CD8-positive, alpha-beta T cell (primary cell): ENCODE measurements at regions of chr20 and their contacts with region 1.

Region 1: DNA sequence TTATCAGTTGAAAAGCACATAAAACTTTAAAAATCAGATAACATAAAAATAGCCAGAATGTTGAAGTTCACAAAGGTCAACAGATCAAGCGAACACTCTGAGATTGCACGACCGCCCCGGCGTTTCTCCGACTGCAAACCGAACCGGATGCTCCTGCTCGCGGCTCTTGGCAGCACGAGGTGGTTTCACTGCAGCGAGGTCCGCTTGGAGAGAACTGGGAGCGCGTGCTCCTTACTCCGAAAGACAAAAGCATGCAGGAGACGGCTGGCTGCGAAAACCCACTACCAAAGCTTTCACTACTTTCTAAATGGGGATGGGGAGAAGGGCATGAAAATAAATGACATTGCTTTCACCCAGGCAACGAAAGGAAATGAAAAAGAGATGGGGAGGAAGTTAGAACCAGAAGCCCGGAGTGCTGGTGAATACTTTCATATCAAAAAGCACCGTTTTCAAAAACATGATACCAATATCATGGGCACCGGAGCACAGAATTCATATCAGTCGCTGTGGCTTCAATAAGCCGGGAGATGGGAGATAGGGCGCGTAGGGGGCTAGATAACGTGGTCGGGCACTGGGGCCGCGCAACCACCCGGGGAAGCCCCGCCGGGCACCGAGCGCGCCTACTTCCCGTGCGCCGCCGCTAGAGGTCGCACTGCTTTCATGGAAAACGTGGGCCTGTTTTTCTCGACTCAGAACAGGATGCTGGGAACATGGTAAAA is 8.3 kb upstream of the ANKRD60 start:
- DNase-seq: peak; percentile 70 to 91 (median 82)
- ATAC-seq: peak; percentile 87
- H3K4me3 ChIP-seq: peak overlapping the region; percentile 53 to 85
- H3K4me3 Mint-ChIP-seq: peak overlapping the region; percentile 86
- H3K27ac ChIP-seq: peak overlapping the region; percentile 56 to 73
- H3K27ac Mint-ChIP-seq: peak overlapping the region; percentile 89
- H3K4me1 ChIP-seq: peaks cover 7% of the 10 kb centered on the region
- H3K4me1 Mint-ChIP-seq: peaks cover 19% of the 10 kb centered on the region
- H3K27me3 ChIP-seq: no peaks in the 10 kb centered on the region
- H3K27me3 Mint-ChIP-seq: no peaks in the 10 kb centered on the region
- CTCF ChIP-seq: peak; percentile 96

Region 2: DNA sequence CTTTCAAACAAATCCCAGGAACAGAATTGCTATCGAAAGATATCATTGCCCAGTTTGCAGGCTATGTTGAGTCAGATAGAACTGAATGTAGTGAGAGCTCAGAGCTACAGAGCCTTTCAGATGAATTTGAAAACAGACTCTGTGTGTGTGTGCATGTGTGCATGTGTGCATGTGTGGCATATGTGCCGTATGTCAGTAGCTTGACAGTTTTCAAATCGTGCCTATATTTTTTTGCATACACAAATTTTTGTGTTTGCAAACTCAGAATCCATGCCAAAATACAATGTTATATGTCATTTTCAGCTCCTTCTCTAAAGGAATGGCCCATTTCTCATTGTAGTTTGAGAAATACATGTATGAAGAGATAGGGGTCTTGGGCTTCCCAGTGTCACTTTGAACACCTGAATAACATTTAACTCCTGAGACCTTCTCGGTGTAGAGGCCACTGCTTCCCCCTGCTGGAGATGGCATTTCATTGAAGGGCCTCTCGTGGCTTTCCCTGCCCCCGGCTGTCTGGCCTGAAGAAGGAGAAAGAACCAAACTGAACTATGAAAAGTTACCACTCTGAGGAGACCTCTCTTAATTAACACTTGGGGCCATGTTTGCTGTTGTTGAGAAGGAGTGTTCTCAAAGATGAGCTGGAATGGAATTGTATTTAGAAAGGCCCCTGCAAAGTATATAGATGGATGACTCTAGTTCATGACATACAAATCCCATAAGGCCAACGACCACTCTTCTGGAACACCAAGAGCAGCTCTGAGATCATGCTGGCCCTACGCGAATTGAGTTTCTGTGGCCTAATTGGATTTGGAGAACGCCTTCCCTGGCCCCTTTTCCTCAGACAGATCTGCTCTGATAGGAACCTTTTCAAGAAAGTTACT is 211.0 kb after region 1 on chr20:
- CTCF ChIA-PET with region 1: interaction called, 45 read pairs
- POLR2A ChIA-PET with region 1: no interaction called
- intact Hi-C with region 1: loop called (anchors 1 kb)
- DNase-seq: peak; percentile 20 to 70 (median 60)
- ATAC-seq: peak; percentile 80
- H3K4me3 ChIP-seq: no peak overlapping the region
- H3K4me3 Mint-ChIP-seq: no peak overlapping the region
- H3K27ac ChIP-seq: no peak overlapping the region
- H3K27ac Mint-ChIP-seq: peak overlapping the region; percentile 30
- H3K4me1 ChIP-seq: no peaks in the 10 kb centered on the region
- H3K4me1 Mint-ChIP-seq: no peaks in the 10 kb centered on the region
- H3K27me3 ChIP-seq: no peaks in the 10 kb centered on the region
- H3K27me3 Mint-ChIP-seq: no peaks in the 10 kb centered on the region
- CTCF ChIP-seq: peak; percentile 50

Region 3: GRCh38 chr20:58839474-58839874 is 602.7 kb after region 1 on chr20:
- CTCF ChIA-PET with region 1: interaction called, 4 read pairs
- POLR2A ChIA-PET with region 1: no interaction called
- intact Hi-C with region 1: loop called in 1 of 2 experiments (anchors 1 kb)
- DNase-seq: peak in 7 of 9 experiments; percentile 27 to 61 (median 46)
- ATAC-seq: peak; percentile 73
- H3K4me3 ChIP-seq: peak overlapping the region in 1 of 2 experiments; percentile 20
- H3K4me3 Mint-ChIP-seq: peak overlapping the region; percentile 57
- H3K27ac ChIP-seq: no peak overlapping the region
- H3K27ac Mint-ChIP-seq: no peak overlapping the region
- H3K4me1 ChIP-seq: no peaks in the 10 kb centered on the region
- H3K4me1 Mint-ChIP-seq: peaks cover 21% of the 10 kb centered on the region
- H3K27me3 ChIP-seq: peaks cover 3 to 8% of the 10 kb centered on the region in 2 experiments
- H3K27me3 Mint-ChIP-seq: peaks cover 23% of the 10 kb centered on the region
- CTCF ChIP-seq: peak; percentile 48

Region 4: GRCh38 chr20:59042796-59043660 is 806.3 kb after region 1 on chr20:
- CTCF ChIA-PET with region 1: no interaction called
- POLR2A ChIA-PET with region 1: no interaction called
- intact Hi-C with region 1: loop called (anchors 10 kb)
- DNase-seq: peak; percentile 88 to 97 (median 94)
- ATAC-seq: peak; percentile 92
- H3K4me3 ChIP-seq: peak overlapping the region; percentile 67 to 94
- H3K4me3 Mint-ChIP-seq: peak overlapping the region; percentile 90
- H3K27ac ChIP-seq: peak overlapping the region; percentile 74 to 92
- H3K27ac Mint-ChIP-seq: peak overlapping the region; percentile 93
- H3K4me1 ChIP-seq: peaks cover 48% of the 10 kb centered on the region
- H3K4me1 Mint-ChIP-seq: peaks cover 52% of the 10 kb centered on the region
- H3K27me3 ChIP-seq: no peaks in the 10 kb centered on the region
- H3K27me3 Mint-ChIP-seq: no peaks in the 10 kb centered on the region
- CTCF ChIP-seq: no peak